H1 (cell line): ENCODE measurements at regions of chr17 and their contacts with region 1.

Region 1: DNA sequence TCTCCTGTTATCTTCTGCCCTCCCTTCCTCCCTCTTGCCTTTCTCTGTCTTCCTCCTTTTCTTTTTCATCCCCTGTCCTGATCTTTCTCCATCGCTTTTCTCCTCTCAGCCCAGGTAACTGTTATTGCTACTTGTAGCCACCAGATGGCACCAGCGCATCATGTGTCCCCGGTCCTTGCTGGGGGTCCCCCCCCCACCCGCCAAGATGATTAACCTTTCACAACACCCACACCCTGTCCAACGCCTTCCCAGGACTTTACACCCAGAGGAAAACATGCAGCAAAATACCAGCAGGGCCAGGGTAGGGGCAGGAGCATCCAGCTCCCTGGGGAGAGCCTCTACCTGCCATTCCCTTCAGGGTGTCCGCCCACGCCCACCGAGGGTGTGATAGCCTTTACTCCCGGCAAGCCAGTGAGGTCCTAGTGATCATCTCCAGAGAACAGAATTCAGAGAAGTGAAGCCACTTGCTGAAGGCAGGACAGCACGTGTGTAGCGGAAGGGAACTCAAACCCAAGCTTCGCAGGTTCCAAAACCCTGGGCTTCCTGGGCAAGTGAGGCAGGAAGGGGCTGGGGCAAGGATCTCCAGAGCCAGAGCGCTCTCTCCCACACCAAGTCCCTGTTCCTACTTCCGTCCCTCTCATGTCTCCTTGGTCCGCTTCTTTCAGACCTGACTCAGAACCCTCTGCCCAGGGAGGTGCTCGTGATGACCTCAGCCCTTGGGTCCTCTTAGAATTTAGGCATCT is 13.5 kb upstream of the TAC4 start:
- DNase-seq: peak in 1 of 2 experiments; percentile 77
- H3K4me3 ChIP-seq: 0 out of 8 replicates have a peak overlapping the region, but pooled peaks of 1 of the 4 experiments have one; percentile 10
- H3K27ac ChIP-seq: no peak overlapping the region
- H3K4me1 ChIP-seq: peaks cover 0 to 29% (median 19%) of the 10 kb centered on the region in 4 experiments; a peak in 6 of 7 replicates
- H3K27me3 ChIP-seq: peaks cover 0 to 3% (median under 1%) of the 10 kb centered on the region in 4 experiments; a peak in 3 of 7 replicates
- CTCF ChIP-seq: peak; percentile 75 to 89 (median 81)
- EP300 ChIP-seq: no peak
- POLR2A ChIP-seq: no peak
- RAD21 ChIP-seq: peak; percentile 97

Region 2: GRCh38 chr17:49822829-49823228 is 38.5 kb before region 1 on chr17:
- CTCF ChIA-PET with region 1: no interaction called
- POLR2A ChIA-PET with region 1: no interaction called
- DNase-seq: no peak
- H3K4me3 ChIP-seq: no peak overlapping the region
- H3K27ac ChIP-seq: no peak overlapping the region
- H3K4me1 ChIP-seq: peaks cover 0 to 11% (median 7%) of the 10 kb centered on the region in 4 experiments; a peak in 5 of 7 replicates
- H3K27me3 ChIP-seq: no peaks in the 10 kb centered on the region
- CTCF ChIP-seq: no peak
- EP300 ChIP-seq: no peak
- POLR2A ChIP-seq: no peak
- RAD21 ChIP-seq: no peak

Region 3: DNA sequence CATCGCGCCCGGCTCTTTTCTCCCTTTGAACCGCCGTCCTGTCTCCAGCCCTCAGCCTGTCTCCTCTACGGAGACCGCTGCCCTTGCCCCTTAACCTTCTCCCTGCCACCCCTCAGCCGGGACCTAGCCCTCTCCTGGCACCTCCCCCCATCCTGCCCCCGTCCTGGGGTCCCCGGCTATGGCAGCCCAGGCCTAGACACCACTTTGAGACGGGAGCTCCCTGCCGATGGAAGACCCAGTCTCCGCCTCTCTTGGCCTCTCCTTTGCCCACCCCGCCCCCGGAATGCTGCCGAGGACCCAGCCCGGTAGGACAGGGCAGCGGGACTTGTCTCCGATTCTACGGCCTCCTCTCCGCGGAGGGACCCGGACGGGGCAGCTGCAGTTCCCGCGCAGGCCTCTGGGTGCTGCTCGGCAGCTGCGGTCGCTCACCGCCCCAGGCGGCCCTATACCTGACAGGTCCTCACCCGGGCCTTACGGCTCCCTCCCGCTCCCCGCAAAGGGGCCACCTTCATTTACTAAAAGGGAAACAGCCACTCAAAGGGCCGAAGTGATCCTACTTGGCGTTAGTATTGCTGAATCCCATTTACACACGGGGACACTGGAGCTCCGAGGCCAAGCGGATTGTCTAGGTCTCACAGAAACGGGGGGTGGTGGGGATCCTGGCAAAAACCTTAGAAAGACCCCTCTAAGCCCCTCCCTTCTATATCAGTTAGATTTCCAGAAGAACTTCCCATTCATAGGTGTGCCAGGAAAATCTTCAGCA is 19.2 kb after region 1 on chr17:
- CTCF ChIA-PET with region 1: interaction called, 138 read pairs
- POLR2A ChIA-PET with region 1: interaction called, 7 read pairs
- DNase-seq: peak; percentile 85 to 95
- H3K4me3 ChIP-seq: peak overlapping the region; percentile 17 to 61 (median 44); a peak in 6 of 8 replicates
- H3K27ac ChIP-seq: no peak overlapping the region
- H3K4me1 ChIP-seq: peaks cover 3 to 15% (median 9%) of the 10 kb centered on the region in 4 experiments
- H3K27me3 ChIP-seq: peaks cover 0 to 4% (median 1%) of the 10 kb centered on the region in 4 experiments; a peak in 5 of 7 replicates
- CTCF ChIP-seq: peak; percentile 89 to 96 (median 91)
- EP300 ChIP-seq: 0 out of 3 replicates have a peak, but pooled peaks of 1 of the 2 experiments have one; percentile 36
- POLR2A ChIP-seq: no peak
- RAD21 ChIP-seq: peak; percentile 92 to 93

Region 4: DNA sequence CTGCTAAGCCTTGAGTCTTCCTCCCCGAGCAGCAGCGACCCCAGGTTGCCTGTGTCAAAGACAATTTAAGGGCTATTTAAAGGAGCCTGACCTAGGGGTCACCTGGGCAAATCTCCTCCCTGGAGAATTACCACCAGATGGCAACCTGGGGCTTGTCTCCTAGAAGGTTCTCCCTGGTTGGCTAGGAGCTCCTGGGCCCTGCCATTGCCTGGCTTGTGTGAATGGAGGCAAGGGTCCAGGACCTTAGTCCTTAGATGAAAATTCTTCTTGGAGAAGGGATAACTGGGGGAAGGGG is 37.8 kb after region 1 on chr17:
- CTCF ChIA-PET with region 1: interaction called, 25 read pairs
- POLR2A ChIA-PET with region 1: interaction called, 4 read pairs
- DNase-seq: peak in 1 of 2 experiments; percentile 70
- H3K4me3 ChIP-seq: no peak overlapping the region
- H3K27ac ChIP-seq: no peak overlapping the region
- H3K4me1 ChIP-seq: peaks cover 4 to 19% (median 14%) of the 10 kb centered on the region in 4 experiments
- H3K27me3 ChIP-seq: peaks cover 5 to 33% (median 32%) of the 10 kb centered on the region in 4 experiments
- CTCF ChIP-seq: peak; percentile 39 to 80 (median 64)
- EP300 ChIP-seq: no peak
- POLR2A ChIP-seq: no peak
- RAD21 ChIP-seq: peak; percentile 63 to 79

Region 5: DNA sequence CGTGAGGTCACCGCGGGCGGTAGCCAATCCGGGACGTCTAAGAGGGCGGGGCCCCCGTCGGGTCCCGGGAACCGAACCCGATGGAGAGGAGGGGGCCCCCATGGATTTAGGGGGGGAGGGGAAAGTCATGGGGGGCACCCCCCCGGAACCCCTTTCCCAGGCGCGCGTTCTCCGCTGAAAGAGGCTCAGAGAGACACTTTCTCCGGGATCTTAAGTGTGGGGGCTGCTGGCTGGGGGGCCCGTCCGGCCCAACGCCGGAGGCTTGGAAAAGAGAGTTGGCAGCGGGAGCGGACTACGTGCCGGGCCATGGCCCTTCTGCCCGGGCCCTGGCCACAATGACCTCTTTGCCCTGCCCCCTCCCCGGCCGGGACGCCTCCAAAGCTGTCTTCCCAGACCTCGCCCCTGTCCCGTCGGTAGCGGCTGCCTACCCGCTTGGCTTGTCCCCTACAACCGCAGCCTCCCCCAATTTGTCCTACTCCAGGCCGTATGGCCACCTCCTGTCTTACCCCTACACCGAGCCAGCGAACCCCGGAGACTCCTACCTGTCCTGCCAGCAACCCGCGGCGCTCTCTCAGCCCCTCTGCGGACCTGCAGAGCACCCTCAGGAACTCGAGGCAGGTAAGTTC is 107.9 kb after region 1 on chr17 and contains the start of gene DLX4:
- CTCF ChIA-PET with region 1: interaction called, 12 read pairs
- POLR2A ChIA-PET with region 1: interaction called, 3 read pairs
- DNase-seq: peak in 1 of 2 experiments; percentile 81
- H3K4me3 ChIP-seq: peak within 1 kb of the TSS; percentile 53 to 78 (median 62)
- H3K27ac ChIP-seq: no peak within 1 kb of the TSS
- H3K4me1 ChIP-seq: peaks cover 0 to 38% (median 25%) of the 10 kb centered on the region in 4 experiments; a peak in 6 of 7 replicates
- H3K27me3 ChIP-seq: peaks cover 91 to 100% (median 96%) of the 10 kb centered on the region in 4 experiments
- CTCF ChIP-seq: no peak
- EP300 ChIP-seq: no peak
- POLR2A ChIP-seq: no peak
- RAD21 ChIP-seq: no peak
- total RNA-seq, gene DLX4: 0.80 and 0.88 TPM in 2 replicates